ENCODE measurements at regions of chr5 and their contacts with region 1.

Region 1: DNA sequence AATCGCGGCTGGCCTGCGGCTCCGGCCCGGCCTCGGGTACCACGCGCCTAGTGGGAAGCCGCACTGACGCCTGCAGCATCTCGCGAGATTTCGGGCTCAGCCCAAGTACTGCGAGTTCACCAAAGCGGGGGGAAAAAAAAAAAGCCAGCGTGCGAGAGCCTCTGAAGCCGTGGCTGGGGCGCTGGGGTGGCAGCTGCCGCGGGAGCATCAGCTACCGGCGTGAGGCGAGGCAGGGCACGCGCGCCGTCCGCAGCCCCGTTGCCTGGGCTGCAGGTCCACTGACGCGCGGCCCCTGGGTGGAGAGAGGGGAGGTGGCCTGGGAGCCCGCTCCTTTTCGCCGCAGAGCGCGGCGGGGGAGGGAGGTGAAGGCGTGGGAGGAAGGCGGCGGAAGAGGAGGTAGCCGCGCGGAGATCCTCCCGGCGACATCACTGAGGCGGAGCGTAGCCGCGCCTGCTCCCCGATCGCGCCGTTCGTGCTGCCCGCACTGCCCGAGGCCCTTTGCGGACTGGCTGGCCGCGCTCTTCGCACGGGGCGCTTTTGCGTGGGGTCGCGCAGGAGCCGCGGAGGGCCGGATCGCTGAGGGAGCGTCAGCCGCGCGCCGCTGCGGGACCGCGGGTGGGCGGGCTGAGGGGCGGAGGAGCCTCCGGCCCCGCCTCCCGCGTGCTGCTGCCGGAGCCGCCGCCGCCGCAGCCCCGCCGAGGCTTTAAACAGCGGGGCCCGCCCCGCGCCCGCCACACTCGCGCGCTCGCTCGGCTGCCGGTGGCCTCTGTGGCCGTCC is at the start of gene SLC12A2:
- DNase-seq: peak; percentile 78 to 95
- H3K4me3 ChIP-seq: peak within 1 kb of the TSS; percentile 87 to 91
- H3K27ac ChIP-seq: peak within 1 kb of the TSS; percentile 93 to 95
- H3K4me1 ChIP-seq: peaks cover 0 to 10% of the 10 kb centered on the region in 2 donors
- H3K27me3 ChIP-seq: no peaks in the 10 kb centered on the region
- CTCF ChIP-seq: no peak
- total RNA-seq, gene SLC12A2: 11.8 TPM

Region 2: GRCh38 chr5:127517480-127518318 is 565.5 kb before region 1 on chr5 and contains the start of gene PRRC1:
- intact Hi-C with region 1: loop called (anchors 5 kb)
- DNase-seq: peak; percentile 10 to 86
- H3K4me3 ChIP-seq: peak within 1 kb of the TSS; percentile 88 to 94
- H3K27ac ChIP-seq: peak within 1 kb of the TSS; percentile 67 to 68
- H3K4me1 ChIP-seq: peaks cover 2 to 10% of the 10 kb centered on the region in 2 donors
- H3K27me3 ChIP-seq: no peaks in the 10 kb centered on the region
- CTCF ChIP-seq: no peak
- total RNA-seq, gene PRRC1: 39.5 TPM

Region 3: DNA sequence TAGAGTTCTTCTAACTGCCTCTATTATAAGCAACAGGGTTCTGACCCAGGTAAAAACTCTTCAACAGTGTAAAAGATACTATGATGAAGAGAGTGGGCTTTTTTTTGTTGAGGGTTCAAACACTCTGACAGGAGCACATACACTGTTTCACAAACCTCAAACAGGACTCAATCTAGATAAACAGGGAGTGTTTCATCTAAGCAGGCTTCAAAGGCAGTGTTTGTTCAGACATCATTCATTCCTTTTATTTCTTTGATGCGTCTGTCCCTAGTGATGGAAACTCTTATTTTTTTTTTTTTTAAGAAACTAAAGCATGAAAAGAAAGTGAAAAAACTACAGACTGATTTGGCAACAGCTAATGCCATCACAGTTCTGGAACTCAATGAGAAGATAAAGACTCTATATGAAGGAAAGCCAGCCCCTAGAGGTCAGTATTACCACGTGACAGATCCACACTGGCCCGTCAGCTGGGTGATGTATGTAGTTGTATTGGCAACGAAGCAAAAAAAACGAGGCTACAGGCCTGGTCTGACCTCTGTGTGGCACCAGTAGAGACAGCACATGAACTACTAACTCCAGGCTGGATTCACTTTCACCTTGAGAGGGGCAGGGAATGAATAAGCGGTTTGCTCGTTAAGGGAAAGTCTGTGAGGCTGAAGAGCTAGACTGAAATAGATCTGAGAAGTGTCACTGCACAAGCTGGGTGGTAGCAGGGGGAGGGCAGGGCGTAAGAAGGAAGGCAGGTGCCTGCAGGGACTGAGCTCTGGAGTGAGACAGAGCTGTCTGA is 207.8 kb before region 1 on chr5:
- intact Hi-C with region 1: loop called (anchors 10 kb)
- DNase-seq: no peak
- H3K4me3 ChIP-seq: no peak overlapping the region
- H3K27ac ChIP-seq: no peak overlapping the region
- H3K4me1 ChIP-seq: peaks cover 0 to 11% of the 10 kb centered on the region in 2 donors
- H3K27me3 ChIP-seq: no peaks in the 10 kb centered on the region
- CTCF ChIP-seq: peak in 1 of 3 experiments; percentile 10

Region 4: DNA sequence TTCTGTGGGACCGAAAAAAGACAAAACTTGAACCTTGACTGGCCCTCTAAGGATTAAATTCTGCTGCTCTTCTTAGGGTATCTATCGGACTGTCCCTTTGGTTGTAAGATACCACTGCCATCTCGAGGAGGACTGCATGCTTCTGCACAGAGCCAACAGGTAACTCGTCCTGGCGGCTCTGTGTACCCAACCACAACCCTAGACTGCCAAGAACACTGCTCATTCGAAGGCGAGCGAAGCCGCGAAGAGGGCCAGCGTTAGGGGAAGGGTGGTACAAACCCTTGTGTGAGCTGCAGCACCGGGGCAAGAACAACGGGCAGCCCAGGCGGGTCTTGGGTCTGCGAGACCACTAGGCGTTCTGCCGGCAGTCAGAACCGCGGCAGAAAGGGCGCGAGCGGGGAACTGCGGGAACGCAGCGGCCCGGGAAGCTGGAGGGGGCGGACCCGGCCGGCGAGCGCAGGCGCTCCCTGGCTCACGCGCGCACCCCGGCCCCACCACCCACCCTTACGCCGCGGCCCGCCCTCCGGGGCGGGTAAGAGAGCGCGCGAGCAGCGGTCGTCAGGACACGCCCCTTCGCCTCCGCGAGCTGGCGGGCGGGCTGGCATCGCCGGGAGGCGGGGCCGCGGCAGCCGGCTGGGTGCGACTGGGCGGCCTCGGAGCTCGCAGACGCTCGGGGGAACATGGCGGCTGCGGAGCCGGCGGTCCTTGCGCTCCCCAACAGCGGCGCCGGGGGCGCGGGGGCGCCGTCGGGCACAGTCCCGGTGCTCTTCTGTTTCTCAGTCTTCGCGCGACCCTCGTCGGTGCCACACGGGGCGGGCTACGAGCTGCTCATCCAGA is 1011.1 kb after region 1 on chr5 and contains the start of gene ISOC1:
- intact Hi-C with region 1: loop called (anchors 5 kb)
- DNase-seq: peak; percentile 61 to 93
- H3K4me3 ChIP-seq: peak within 1 kb of the TSS; percentile 79 to 89
- H3K27ac ChIP-seq: peak within 1 kb of the TSS; percentile 71 to 76
- H3K4me1 ChIP-seq: peaks cover 0 to 15% of the 10 kb centered on the region in 2 donors
- H3K27me3 ChIP-seq: no peaks in the 10 kb centered on the region
- CTCF ChIP-seq: no peak
- total RNA-seq, gene ISOC1: 5.1 TPM